Adrenal gland (tissue), 19 donors: ENCODE measurements at regions of chr12 and their contacts with region 1.

Region 1: GRCh38 chr12:39272871-39273770 is 169.8 kb downstream of the KIF21A start:
- DNase-seq: peak in 5 of 7 donors; percentile 24 to 45 (median 37)
- H3K4me3 ChIP-seq: no peak overlapping the region
- H3K27ac ChIP-seq: no peak overlapping the region
- H3K4me1 ChIP-seq: no peaks in the 10 kb centered on the region
- H3K27me3 ChIP-seq: no peaks in the 10 kb centered on the region
- CTCF ChIP-seq: peak in 5 of 6 experiments; percentile 36 to 84 (median 57)
- POLR2A ChIP-seq: no peak

Region 2: DNA sequence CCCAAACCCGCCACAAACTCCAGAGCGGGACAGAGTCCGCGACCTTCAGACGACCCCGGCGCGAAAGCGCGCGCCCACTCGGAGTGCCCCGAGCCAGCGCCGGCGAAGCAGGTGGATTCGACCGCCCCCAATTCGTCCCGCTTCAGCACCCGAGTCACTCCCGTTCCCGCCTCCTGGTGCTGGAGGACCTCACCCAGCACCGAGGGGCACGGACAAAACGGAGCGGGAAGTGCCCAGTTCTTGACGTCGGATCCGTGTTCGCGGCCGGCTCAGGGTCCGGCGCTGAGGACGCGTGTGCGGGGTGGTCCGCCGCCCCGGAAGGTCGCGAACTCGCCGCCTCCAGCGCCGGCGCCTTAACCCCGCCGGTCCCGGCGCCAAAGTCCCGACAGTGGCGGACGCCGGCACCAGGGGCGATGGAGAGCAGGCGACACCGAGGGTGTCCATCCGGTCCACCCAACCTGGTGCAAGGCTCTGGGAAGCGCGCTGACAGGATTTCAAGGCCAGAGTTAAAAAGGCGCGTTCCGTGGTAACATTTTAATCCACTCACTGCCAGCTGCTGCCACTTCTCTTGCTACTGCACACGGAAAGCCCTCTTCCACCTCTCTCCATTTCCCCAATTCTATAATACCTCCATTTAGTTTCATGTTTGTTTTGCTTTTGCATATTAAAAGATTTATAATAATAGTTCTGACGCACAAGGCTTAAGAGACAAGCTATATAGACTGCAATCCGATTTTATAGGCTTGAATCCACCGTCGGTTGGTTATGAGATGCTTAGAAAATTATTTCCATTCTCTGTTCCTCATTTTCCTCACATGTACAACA is 127.7 kb before region 1 on chr12:
- intact Hi-C with region 1: loop called in 1 of 2 experiments (anchors 5 kb)
- DNase-seq: peak in 5 of 7 donors; percentile 38 to 82 (median 62)
- H3K4me3 ChIP-seq: peak overlapping the region in 2 of 4 donors; percentile 41 to 78
- H3K27ac ChIP-seq: no peak overlapping the region
- H3K4me1 ChIP-seq: peaks cover 4 to 9% of the 10 kb centered on the region in 2 donors
- H3K27me3 ChIP-seq: peaks cover 36% of the 10 kb centered on the region
- CTCF ChIP-seq: peak in 5 of 6 experiments; percentile 27 to 79 (median 74)
- POLR2A ChIP-seq: no peak

Region 3: GRCh38 chr12:39237004-39237403 is 36.1 kb before region 1 on chr12:
- intact Hi-C with region 1: no loop called
- DNase-seq: no peak
- H3K4me3 ChIP-seq: no peak overlapping the region
- H3K27ac ChIP-seq: no peak overlapping the region
- H3K4me1 ChIP-seq: no peaks in the 10 kb centered on the region
- H3K27me3 ChIP-seq: no peaks in the 10 kb centered on the region
- CTCF ChIP-seq: no peak
- POLR2A ChIP-seq: no peak